ENCODE measurements at regions of chr4 and their contacts with region 1.

Region 1: DNA sequence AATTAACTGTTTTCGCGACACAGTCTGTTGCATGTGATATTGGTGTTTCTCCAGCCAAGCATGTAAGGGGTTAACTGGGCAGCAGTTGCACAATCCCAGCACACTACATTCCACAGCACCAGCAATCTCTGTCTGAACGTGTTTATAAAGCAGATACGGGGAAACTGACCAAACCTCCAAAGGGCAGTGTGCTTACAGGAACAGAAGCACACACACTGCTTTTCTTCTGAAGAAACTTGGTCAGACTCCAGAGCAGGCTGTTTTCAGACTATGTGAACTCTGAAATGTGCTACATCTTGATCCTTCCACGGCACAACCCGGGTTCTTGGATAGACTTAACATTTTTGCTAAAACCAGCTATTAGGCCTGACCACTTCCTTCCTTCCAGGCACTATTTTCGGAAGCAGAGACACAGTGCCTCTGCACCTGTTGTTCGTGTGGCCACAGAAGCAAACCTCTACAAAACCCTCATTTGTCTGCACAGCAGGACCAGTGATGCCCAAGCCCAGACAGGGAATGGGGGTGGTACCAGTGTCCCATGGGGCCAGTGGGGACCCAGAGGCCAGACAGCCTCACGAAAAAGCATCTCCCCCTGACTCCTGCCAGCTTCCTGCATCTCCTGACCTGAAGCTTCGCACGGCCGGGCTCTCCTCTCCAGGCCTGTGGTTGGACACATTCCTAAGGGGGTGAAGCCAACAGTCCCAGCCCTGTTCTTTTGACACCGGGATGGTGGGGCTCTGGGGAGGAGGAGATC is 90.1 kb downstream of the IRF2 start:
- DNase-seq: peak; percentile 92
- ATAC-seq: peak; percentile 77
- H3K4me3 ChIP-seq: peak overlapping the region; percentile 59; the same call in 1 of the 2 replicates
- H3K27ac ChIP-seq: peak overlapping the region; percentile 88
- H3K4me1 ChIP-seq: peaks cover 68% of the 10 kb centered on the region
- H3K27me3 ChIP-seq: no peaks in the 10 kb centered on the region
- CTCF ChIP-seq: no peak
- EP300 ChIP-seq: peak; percentile 76 to 86
- POLR2A ChIP-seq: peak; percentile 70
- RAD21 ChIP-seq: no peak

Region 2: DNA sequence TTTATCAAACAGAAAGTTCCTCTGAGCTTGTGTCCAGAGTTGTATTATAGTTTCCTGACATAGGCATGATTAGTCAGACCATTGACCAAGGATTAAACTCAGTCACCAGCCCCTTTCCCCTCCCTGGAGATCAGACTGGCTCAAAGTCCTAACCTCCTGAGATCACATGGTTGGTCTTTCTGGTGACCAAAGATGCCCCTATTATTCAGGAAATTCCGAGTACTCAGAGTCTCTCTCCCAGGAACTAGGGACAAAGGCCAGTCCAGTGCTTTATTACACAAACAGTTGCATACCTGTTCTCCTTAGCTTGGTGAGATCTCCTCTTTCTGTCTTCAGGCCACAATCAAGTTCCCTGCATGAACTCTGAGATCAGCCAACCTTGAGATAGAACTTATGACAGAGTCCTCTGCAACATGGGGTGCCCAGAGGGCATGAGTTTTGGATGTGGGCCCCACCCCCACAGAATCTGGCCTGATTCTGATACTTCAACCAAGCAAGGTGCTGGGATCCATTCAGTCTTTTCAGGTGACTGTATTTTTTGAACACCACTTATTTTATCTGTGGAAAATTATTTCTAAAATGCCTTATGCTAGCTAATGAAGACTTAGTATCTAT is 151.9 kb before region 1 on chr4:
- CTCF ChIA-PET with region 1: no interaction called
- POLR2A ChIA-PET with region 1: no interaction called
- RAD21 ChIA-PET with region 1: no interaction called
- SMC1A ChIA-PET with region 1: no interaction called
- in situ Hi-C with region 1: no loop called
- intact Hi-C with region 1: no loop called
- DNase-seq: no peak
- ATAC-seq: no peak
- H3K4me3 ChIP-seq: no peak overlapping the region
- H3K27ac ChIP-seq: no peak overlapping the region
- H3K4me1 ChIP-seq: peaks cover 6% of the 10 kb centered on the region
- H3K27me3 ChIP-seq: no peaks in the 10 kb centered on the region; a peak in 1 of 4 replicates
- CTCF ChIP-seq: no peak
- EP300 ChIP-seq: no peak
- POLR2A ChIP-seq: no peak
- RAD21 ChIP-seq: no peak

Region 3: GRCh38 chr4:184329659-184330400 is 54.4 kb before region 1 on chr4:
- CTCF ChIA-PET with region 1: interaction called, 4 read pairs
- POLR2A ChIA-PET with region 1: interaction called, 20 read pairs
- RAD21 ChIA-PET with region 1: interaction called, 36 read pairs
- SMC1A ChIA-PET with region 1: interaction called, 10 read pairs
- in situ Hi-C with region 1: no loop called
- intact Hi-C with region 1: no loop called
- DNase-seq: peak; percentile 90
- ATAC-seq: peak; percentile 81
- H3K4me3 ChIP-seq: no peak overlapping the region
- H3K27ac ChIP-seq: peak overlapping the region; percentile 90
- H3K4me1 ChIP-seq: peaks cover 44% of the 10 kb centered on the region
- H3K27me3 ChIP-seq: no peaks in the 10 kb centered on the region
- CTCF ChIP-seq: no peak; a peak in 2 of 6 replicates
- EP300 ChIP-seq: peak; percentile 98 to 100
- POLR2A ChIP-seq: peak; percentile 53; the same call in 1 of the 2 replicates
- RAD21 ChIP-seq: peak; percentile 28; the same call in 1 of the 2 replicates

Region 4: DNA sequence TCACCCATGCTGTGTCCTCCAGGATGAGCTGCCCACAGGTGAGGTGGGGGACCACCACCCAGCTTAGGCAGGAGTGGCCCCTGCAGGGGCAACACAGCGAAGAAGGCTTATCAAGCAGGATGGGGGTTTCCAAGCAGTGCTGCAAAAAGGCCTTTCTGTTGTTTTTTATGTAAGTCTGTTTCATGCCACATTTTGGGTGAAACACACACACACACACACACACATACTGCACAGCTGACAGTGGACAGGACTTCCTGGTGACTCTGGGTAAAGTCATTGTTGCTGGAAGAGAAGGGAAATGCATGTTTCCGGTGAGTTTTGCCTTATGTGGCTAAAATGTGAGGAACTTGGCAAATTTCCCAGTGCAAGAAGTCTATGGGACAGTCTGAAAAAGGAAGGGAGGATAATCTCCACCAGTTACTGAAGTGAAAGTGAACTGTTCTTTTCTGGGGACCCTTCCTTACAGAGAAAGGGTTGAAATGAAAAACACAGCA is 29.1 kb before region 1 on chr4:
- CTCF ChIA-PET with region 1: interaction called, 11 read pairs
- POLR2A ChIA-PET with region 1: interaction called, 114 read pairs
- RAD21 ChIA-PET with region 1: interaction called, 92 read pairs
- SMC1A ChIA-PET with region 1: interaction called, 184 read pairs
- in situ Hi-C with region 1: no loop called
- intact Hi-C with region 1: loop called (anchors 1 kb)
- DNase-seq: peak; percentile 84
- ATAC-seq: peak; percentile 15
- H3K4me3 ChIP-seq: no peak overlapping the region
- H3K27ac ChIP-seq: peak overlapping the region; percentile 99
- H3K4me1 ChIP-seq: peaks cover 16% of the 10 kb centered on the region
- H3K27me3 ChIP-seq: no peaks in the 10 kb centered on the region
- CTCF ChIP-seq: no peak
- EP300 ChIP-seq: peak; percentile 52 to 63; a peak in 2 of 4 replicates
- POLR2A ChIP-seq: no peak
- RAD21 ChIP-seq: peak; percentile 28

Region 5: DNA sequence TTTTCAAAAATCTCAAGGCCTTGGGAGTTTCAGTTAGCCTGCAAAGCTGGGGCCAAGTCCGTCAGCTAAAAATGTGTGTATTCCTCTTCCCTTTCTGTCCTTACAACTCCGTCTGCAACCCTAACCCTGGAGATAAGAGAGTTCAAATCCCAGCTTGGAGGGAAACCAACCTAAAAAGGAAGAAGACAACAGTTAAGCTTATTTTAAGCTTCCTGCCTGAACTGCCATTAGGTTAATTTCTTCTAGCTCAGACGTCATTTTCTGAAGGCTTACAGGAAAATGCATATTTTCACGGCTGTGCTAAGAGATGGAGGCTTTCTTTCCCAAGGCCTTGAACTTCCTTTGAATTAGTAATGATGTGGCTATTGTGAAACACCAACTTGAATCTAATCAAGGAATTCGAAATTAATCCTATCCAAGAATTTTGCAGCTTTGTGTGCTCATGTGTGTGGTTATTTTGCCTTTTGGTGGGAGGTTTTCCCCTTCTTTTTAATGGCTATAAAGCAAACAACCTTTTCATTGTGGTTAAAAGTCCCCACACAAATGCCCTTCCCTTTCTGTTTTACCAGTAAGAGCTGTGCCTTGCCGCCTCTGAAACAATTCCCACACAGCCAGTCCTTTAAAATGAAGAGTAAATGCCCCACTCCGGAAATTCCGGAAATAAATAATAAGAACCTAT is 13.4 kb before region 1 on chr4:
- CTCF ChIA-PET with region 1: interaction called, 6 read pairs
- POLR2A ChIA-PET with region 1: interaction called, 4 read pairs
- RAD21 ChIA-PET with region 1: interaction called, 14 read pairs
- SMC1A ChIA-PET with region 1: interaction called, 30 read pairs
- in situ Hi-C with region 1: no loop called
- intact Hi-C with region 1: no loop called
- DNase-seq: no peak
- ATAC-seq: no peak
- H3K4me3 ChIP-seq: no peak overlapping the region
- H3K27ac ChIP-seq: no peak overlapping the region
- H3K4me1 ChIP-seq: no peaks in the 10 kb centered on the region
- H3K27me3 ChIP-seq: no peaks in the 10 kb centered on the region
- CTCF ChIP-seq: no peak
- EP300 ChIP-seq: no peak
- POLR2A ChIP-seq: no peak
- RAD21 ChIP-seq: no peak

Region 6: DNA sequence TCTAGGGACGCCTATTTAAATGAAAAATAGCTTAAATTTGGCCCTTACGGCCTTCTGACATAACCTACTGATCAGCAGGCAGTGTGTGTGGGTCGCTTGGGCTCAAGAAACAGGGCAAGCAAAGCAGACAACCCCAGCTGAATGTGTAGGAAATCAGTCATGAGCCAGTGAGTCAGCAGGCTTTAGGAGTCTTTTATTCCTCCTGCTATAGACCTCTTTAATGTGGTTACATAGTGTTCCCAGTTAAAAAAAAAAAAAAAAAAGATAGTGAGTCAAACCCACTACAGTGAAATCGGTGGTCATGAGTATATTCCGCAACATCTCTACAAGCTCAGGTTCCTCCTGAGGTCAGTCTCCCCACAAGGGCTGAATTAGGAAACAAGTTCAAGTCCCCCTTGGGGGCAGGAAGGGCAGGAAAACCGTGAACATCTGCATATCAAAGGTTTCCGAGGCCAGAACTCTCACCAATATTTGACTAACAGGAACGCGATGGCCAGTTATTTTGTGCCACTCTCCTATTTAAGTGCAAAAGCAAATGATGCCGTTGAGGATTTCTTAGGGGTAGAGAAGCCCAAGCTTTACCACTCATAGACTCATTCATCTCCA is 408.8 kb after region 1 on chr4:
- CTCF ChIA-PET with region 1: no interaction called
- POLR2A ChIA-PET with region 1: no interaction called
- RAD21 ChIA-PET with region 1: no interaction called
- SMC1A ChIA-PET with region 1: no interaction called
- in situ Hi-C with region 1: no loop called
- intact Hi-C with region 1: no loop called
- DNase-seq: no peak
- ATAC-seq: peak; percentile 33; the same call in 2 of the 3 replicates
- H3K4me3 ChIP-seq: no peak overlapping the region
- H3K27ac ChIP-seq: no peak overlapping the region
- H3K4me1 ChIP-seq: peaks cover 15% of the 10 kb centered on the region
- H3K27me3 ChIP-seq: no peaks in the 10 kb centered on the region
- CTCF ChIP-seq: no peak
- EP300 ChIP-seq: no peak
- POLR2A ChIP-seq: no peak
- RAD21 ChIP-seq: no peak

Measured in GM12878 (cell line).